Heart right ventricle (tissue), 16 donors: ENCODE measurements at regions of chr21 and their contacts with region 1.

Region 1: DNA sequence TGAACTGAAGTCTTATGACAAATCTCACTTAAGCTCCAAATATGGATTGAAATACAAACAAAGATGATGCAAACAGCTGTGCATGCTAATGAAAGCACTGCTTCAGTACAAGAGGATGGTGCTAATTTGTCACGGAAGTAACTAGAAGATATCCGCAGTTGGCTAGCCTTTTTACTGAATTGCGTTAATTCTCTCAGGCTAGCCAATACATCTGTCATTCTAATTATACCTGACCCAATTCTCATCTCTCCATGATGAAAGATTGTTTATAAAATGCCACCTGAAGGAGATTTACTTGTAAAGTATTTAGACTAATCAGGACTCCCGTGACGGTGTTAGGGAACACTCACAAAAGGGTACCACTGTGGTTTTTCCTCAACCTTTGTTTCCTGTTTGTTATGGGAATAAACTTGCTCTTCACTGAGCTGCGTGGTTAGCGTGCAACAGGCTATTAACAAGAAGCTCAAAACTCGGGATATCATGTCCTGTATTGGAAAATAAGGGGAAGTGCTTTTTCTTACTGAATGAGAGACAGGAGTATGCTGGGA is 162.5 kb downstream of the APP start:
- DNase-seq: no peak
- ATAC-seq: peak in 6 of 8 donors; percentile 45 to 75 (median 65)
- H3K4me3 ChIP-seq: no peak overlapping the region
- H3K27ac ChIP-seq: peak overlapping the region in 8 of 10 donors; percentile 3 to 67 (median 34)
- H3K4me1 ChIP-seq: peaks cover 0 to 22% (median 10%) of the 10 kb centered on the region in 9 donors
- H3K27me3 ChIP-seq: no peaks in the 10 kb centered on the region
- CTCF ChIP-seq: no peak

Region 2: GRCh38 chr21:25895565-25896205 is 112.3 kb before region 1 on chr21:
- intact Hi-C with region 1: loop called in 1 of 10 experiments (anchors 10 kb)
- DNase-seq: no peak
- ATAC-seq: peak in 7 of 8 donors; percentile 63 to 79 (median 76)
- H3K4me3 ChIP-seq: no peak overlapping the region
- H3K27ac ChIP-seq: peak overlapping the region in 2 of 10 donors; percentile 5 to 9
- H3K4me1 ChIP-seq: peaks cover 0 to 45% (median 13%) of the 10 kb centered on the region in 9 donors
- H3K27me3 ChIP-seq: no peaks in the 10 kb centered on the region
- CTCF ChIP-seq: peak; percentile 47 to 78 (median 64)

Region 3: GRCh38 chr21:26159869-26160268 is 151.8 kb after region 1 on chr21:
- intact Hi-C with region 1: loop called in 1 of 10 experiments (anchors 5 kb)
- DNase-seq: no peak
- ATAC-seq: no peak
- H3K4me3 ChIP-seq: no peak overlapping the region
- H3K27ac ChIP-seq: no peak overlapping the region
- H3K4me1 ChIP-seq: peaks cover 0 to 57% (median 20%) of the 10 kb centered on the region in 9 donors
- H3K27me3 ChIP-seq: no peaks in the 10 kb centered on the region
- CTCF ChIP-seq: no peak